AG04449 (cell line): ENCODE measurements at regions of chr4 and their contacts with region 1.

Region 1: DNA sequence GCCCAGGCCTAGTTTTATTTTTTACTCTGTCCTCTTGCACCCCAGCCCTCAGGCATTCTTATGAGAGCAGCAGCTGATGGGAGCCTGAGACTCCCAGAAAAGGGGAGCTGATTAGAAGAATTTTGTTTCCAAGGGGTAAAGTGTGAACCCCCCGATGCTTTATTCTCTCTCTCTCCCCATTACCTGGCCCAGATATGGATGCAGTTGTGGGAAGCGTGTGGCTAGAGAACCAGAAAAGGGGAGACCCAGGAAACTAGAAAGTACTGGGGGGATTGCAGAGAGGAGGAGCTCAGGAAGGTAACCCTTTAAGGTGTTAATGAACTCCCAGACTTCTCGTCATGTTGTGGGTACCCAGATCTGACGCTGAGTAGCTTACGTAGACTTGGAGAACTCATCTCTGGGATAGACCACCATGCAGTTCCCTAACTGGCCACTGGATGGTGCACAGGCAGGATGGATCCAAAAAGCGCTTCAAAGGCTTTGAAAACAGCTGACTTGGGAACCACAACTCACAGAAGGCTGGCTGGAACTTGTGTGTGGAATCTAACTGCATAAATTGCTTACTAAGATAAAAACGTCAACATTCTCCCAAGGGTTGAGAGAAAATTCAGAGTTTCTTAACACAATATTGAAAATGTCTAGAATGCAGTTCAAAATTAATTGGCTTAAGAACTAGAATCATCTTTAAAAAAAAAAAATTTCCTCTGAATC is 64.7 kb downstream of the TBC1D14 start:
- DNase-seq: no peak
- H3K4me3 ChIP-seq: no peak overlapping the region
- CTCF ChIP-seq: peak; percentile 92

Region 2: GRCh38 chr4:6777636-6778281 is 196.5 kb before region 1 on chr4:
- CTCF ChIA-PET with region 1: no interaction called
- POLR2A ChIA-PET with region 1: no interaction called
- DNase-seq: no peak
- H3K4me3 ChIP-seq: no peak overlapping the region
- CTCF ChIP-seq: no peak

Region 3: DNA sequence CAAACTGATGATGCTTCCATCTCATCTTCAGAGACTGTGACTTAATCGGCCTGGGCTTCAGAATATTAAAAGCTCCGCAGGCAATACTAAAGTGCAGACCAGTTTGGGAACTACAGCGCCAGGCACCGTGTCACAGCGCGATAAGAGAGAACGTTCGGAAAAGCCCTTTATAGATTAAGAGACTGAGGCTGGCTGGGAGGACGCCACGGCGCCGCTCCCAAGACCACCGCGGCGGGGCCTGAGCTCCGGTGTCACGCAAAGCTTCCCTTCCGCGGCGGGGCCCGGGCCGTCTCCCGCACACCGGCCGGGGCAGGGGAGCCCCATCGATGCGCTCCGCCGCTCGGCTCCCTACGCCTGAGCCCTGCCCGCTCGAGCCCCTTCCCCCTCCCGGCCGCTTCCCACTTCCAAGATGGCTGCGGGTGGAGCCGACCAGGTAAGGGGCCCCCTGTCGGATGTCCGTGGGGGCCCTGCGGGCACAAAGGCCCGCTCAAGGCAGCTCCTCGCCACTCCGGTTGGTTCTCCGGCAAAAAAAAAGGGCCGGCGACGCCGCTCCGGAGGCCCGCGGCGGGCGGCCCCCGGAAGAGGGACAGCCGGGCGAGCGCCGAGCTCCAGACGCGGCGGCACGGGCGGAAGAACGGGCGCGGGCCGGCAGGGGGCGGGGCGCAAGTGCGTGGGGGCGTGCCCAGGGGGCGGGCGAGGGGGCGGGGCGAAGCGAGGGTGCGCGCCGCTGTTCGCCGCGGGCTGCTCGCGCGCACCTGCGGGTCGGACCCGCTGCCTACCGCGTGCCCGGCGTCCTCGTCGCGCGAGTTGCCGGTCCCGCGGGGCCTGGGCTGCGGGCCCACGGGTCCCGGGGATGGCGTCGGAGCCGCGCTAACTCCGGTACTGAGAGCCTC is 65.0 kb before region 1 on chr4 and contains the start of gene TBC1D14:
- CTCF ChIA-PET with region 1: interaction called, 11 read pairs
- POLR2A ChIA-PET with region 1: no interaction called
- DNase-seq: no peak
- H3K4me3 ChIP-seq: peak within 1 kb of the TSS; percentile 71
- CTCF ChIP-seq: peak; percentile 21

Region 4: GRCh38 chr4:6953751-6954380 is 20.4 kb before region 1 on chr4:
- CTCF ChIA-PET with region 1: interaction called, 30 read pairs
- POLR2A ChIA-PET with region 1: no interaction called
- DNase-seq: no peak
- H3K4me3 ChIP-seq: no peak overlapping the region
- CTCF ChIP-seq: no peak

Region 5: GRCh38 chr4:6986781-6987587 is 12.7 kb after region 1 on chr4:
- CTCF ChIA-PET with region 1: interaction called, 43 read pairs
- POLR2A ChIA-PET with region 1: no interaction called
- DNase-seq: no peak
- H3K4me3 ChIP-seq: peak overlapping the region; percentile 98
- CTCF ChIP-seq: no peak

Region 6: GRCh38 chr4:7060346-7061150 is 86.3 kb after region 1 on chr4:
- CTCF ChIA-PET with region 1: interaction called, 173 read pairs
- POLR2A ChIA-PET with region 1: no interaction called
- DNase-seq: no peak
- H3K4me3 ChIP-seq: no peak overlapping the region
- CTCF ChIP-seq: no peak